Breast epithelium (tissue), 4 donors: ENCODE measurements at regions of chr17 and their contacts with region 1.

Region 1: DNA sequence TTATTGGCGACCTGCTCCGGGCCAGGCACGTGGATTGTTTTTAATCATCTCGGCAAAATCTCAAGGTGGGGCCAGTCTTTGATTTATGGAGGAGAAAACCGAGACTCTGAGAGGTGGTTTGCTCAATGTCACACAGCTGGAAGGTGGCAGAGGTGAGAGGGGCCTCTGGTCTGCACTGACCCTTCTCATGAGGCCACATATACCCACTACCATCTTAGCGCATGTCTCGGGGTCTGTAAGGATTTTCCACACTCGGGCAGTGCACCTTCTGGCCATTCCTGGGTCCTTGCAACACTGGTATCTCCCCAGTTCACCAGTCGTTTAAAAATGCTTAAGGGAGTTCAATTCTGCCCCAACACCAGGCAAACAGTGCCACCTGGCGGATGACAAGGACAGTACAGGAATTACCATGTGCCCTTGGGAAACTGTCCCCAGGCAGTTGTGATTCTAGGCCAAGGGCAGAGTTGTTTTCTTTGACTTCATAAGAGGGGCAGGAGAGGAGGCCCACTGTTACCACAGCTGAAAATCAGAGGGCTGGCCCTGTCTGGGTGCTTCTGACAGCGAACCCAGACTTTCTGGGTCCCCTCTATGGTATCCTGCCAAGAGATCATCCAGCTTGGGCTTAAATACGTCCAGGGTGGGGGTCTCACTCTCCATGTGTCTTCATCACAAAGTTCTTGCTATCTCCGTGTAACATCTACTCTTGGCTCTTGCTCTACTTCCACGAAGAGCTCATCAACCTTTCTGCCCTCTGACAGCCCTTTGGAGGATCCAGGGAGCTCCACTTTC is 39.4 kb upstream of the RAI1 start:
- DNase-seq: peak; percentile 44 to 73
- H3K4me3 ChIP-seq: no peak overlapping the region
- H3K27ac ChIP-seq: no peak overlapping the region
- H3K4me1 ChIP-seq: no peaks in the 10 kb centered on the region
- H3K27me3 ChIP-seq: no peaks in the 10 kb centered on the region
- CTCF ChIP-seq: peak; percentile 92 to 97 (median 97)
- POLR2A ChIP-seq: no peak

Region 2: DNA sequence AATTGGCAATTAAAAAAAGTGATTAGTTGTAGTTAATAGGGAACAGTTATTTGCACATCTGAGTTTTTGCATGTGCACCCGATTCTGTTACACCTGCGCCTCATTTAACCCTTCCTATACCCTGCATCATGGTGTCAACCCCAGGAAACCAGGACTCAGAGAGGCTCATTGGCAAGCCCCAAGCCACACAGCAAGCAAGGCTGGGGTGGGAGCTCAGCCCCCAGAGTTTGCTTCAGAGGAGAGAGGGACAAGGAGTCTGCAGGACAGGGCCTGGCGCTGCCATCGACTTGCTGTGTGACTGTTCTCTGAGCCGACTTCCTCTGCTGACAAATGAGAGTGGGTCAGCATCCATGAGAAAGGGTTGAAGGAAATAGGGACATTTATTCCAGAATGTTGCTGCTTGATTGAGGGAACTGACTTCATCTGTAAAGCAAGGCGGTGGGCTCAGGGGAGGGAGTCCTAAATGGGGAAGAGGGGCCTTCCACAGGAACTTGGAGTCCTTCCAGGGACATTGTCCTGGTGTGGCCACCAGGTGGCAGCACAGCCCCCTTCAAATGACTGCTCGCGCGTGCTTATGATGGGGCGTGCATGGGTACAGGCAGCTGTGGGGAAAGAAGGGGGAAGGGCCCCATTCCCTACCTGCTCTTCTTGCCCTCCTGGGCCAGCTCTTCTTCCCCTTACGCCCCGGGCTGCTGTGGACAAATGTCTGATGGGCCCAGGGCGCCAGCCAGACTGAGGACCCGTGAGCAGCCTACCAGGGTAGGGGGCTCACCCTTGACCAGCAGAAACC is 287.1 kb before region 1 on chr17:
- intact Hi-C with region 1: loop called (anchors 5 kb)
- DNase-seq: peak; percentile 46 to 70
- H3K4me3 ChIP-seq: no peak overlapping the region
- H3K27ac ChIP-seq: no peak overlapping the region
- H3K4me1 ChIP-seq: peaks cover 0 to 4% of the 10 kb centered on the region in 2 donors
- H3K27me3 ChIP-seq: no peaks in the 10 kb centered on the region
- CTCF ChIP-seq: peak; percentile 83 to 94 (median 92)
- POLR2A ChIP-seq: no peak